PC-9 (cell line): ENCODE measurements at regions of chr10 and their contacts with region 1.

Region 1: DNA sequence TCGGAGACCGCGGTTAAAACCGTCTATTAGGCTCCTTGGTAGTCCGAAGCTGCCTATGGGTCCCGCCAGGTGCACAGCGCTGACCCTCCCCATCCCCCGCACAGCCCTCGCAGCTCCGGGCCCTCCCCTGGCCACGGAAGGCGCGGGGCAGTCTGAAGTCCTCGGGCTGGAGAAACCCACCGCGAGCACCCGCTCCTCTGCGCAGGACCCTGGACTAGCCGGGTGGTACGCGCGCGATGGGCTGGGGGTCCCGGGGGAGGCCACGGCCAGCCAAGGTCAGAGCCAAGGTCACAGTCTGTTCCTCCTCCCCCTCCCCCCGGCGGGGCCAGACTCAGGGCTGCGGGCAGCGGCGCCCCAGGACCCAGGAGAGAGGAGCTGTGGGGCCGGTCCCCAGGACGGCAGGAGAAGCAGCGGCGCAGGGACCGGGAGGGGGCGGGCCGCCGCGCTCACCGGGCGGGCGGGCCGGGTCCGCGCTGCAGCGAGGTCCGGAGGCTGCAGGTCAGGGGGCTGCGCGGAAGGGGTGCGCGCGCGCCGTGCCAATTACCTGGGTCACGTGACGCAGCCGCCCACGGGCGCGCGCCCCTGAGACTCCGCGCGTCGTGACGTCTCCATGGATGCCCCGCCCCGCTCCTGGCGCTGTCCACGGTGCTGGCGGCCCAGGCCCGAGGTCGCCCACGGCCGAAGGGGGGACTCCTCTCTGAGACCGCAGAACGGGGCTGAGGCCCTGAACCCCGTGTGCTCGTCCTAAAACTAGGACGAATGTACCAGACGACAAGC is at the start of gene OGDHL:
- DNase-seq: peak in 1 of 2 experiments; percentile 56
- H3K4me3 ChIP-seq: no peak within 1 kb of the TSS
- H3K27ac ChIP-seq: no peak within 1 kb of the TSS
- H3K4me1 ChIP-seq: no peaks in the 10 kb centered on the region
- H3K27me3 ChIP-seq: peaks cover 51% of the 10 kb centered on the region
- CTCF ChIP-seq: no peak
- total RNA-seq, gene OGDHL: not detected in 2 replicates

Region 2: GRCh38 chr10:49606981-49607535 is 154.9 kb before region 1 on chr10:
- CTCF ChIA-PET with region 1: no interaction called
- POLR2A ChIA-PET with region 1: no interaction called
- intact Hi-C with region 1: loop called (anchors 10 kb)
- DNase-seq: peak; percentile 46 to 75
- H3K4me3 ChIP-seq: no peak overlapping the region
- H3K27ac ChIP-seq: no peak overlapping the region
- H3K4me1 ChIP-seq: no peaks in the 10 kb centered on the region
- H3K27me3 ChIP-seq: peaks cover 14% of the 10 kb centered on the region; the same call in 1 of the 2 replicates
- CTCF ChIP-seq: no peak

Region 3: DNA sequence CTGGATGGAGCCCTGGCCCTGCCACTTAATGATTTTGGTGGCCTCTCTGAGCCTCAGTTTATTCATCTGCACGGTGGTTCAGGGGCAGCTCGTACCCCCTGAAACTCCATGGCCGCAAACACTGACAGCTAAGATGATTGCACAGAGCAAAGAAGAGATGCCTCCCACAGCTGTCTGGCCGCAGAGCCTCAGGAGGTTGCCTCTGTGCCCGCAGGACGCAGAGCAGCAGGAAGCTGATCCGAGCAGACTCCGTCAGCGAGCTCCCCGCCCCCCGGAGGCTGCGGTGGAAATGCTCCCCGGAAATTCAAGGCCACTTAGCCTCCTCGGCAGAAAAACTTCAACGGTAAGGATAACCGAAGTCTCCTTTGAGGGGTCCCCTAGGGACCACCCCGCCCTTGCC is 112.7 kb before region 1 on chr10:
- CTCF ChIA-PET with region 1: no interaction called
- POLR2A ChIA-PET with region 1: no interaction called
- intact Hi-C with region 1: no loop called
- DNase-seq: peak in 1 of 2 experiments; percentile 31
- H3K4me3 ChIP-seq: no peak overlapping the region
- H3K27ac ChIP-seq: no peak overlapping the region
- H3K4me1 ChIP-seq: no peaks in the 10 kb centered on the region
- H3K27me3 ChIP-seq: peaks cover 38% of the 10 kb centered on the region
- CTCF ChIP-seq: no peak

Region 4: GRCh38 chr10:50832171-50832751 is 1070.3 kb after region 1 on chr10:
- CTCF ChIA-PET with region 1: no interaction called
- POLR2A ChIA-PET with region 1: no interaction called
- intact Hi-C with region 1: no loop called
- DNase-seq: no peak
- H3K4me3 ChIP-seq: no peak overlapping the region
- H3K27ac ChIP-seq: no peak overlapping the region
- H3K4me1 ChIP-seq: no peaks in the 10 kb centered on the region
- H3K27me3 ChIP-seq: peaks cover 7% of the 10 kb centered on the region; the same call in 1 of the 2 replicates
- CTCF ChIP-seq: no peak